AG04449 (cell line): ENCODE measurements at regions of chr13 and their contacts with region 1.

Region 1: GRCh38 chr13:27449936-27450828 is at the start of gene MTIF3:
- DNase-seq: peak; percentile 34
- H3K4me3 ChIP-seq: peak within 1 kb of the TSS; percentile 83
- CTCF ChIP-seq: no peak

Region 2: DNA sequence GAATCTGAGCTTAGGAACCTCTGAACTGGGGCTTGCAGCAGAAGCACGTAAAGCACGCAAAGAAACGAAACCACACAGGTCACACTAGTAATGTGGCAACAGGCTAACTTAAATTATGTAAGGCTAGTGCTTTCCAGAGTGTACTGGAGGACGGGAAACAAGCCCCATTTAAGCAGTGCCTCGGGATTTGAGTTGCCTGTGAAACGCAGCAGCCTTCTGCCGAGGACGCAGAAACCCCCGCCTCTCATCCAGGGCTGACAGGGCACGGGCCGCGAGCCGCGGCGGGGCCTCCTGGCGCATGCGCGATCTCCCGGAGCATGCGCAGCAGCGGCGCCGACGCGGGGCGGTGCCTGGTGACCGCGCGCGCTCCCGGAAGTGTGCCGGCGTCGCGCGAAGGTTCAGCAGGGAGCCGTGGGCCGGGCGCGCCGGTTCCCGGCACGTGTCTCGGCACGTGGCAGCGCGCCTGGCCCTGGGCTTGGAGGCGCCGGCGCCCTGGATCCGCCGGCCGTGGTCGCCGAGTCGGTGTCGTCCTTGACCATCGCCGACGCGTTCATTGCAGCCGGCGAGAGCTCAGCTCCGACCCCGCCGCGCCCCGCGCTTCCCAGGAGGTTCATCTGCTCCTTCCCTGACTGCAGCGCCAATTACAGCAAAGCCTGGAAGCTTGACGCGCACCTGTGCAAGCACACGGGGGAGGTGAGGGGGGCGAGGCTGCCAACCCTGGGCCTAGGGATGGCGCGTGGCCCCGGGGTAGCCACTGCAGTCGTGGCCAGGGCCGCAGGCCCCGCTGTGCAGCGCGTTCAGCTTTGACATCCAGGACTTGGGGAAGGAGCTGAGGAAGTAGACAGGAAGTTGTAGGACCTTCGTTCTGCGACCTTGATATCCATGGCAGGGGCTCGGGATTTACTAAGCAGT is 25.7 kb before region 1 on chr13 and contains the start of gene GTF3A:
- CTCF ChIA-PET with region 1: interaction called, 12 read pairs
- POLR2A ChIA-PET with region 1: interaction called, 5 read pairs
- DNase-seq: no peak
- H3K4me3 ChIP-seq: peak within 1 kb of the TSS; percentile 83
- CTCF ChIP-seq: no peak

Region 3: DNA sequence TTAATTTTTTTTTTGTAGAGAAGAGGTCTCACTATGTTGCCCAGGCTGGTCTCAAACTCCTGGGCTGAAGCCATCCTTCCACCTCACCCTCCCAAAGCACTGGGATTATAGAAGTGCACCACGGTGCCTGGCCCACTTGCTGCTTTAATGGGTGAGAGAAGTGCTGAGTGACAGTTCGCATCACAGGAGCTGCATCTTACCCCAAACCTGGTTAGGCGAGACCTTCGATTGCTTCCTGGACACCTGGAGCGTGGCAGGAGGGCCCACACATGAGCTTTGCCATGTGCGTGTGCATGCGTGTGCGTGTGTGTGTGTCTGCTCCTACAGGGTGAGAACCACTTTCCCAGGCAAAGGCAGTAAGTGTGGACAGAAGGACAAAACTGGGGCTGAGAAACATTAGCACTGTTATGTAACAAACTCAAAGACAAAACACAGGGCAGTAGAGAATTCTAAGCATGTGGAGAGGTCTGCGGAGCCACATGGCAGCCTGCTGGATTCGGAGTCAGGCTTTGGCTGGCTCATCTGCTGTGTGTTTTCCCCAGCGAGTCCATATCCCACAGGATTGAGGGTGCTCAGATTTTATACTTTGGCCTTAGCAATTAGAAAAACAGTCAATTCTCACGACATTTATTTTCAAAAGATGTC is 11.9 kb after region 1 on chr13:
- CTCF ChIA-PET with region 1: interaction called, 11 read pairs
- POLR2A ChIA-PET with region 1: no interaction called
- DNase-seq: no peak
- H3K4me3 ChIP-seq: no peak overlapping the region
- CTCF ChIP-seq: no peak